GM13976 (cell line): ENCODE measurements at regions of chr1 and their contacts with region 1.

Region 1: GRCh38 chr1:157487096-157487495 is 65.2 kb downstream of the FCRL5 start:
- DNase-seq: no peak
- CTCF ChIP-seq: no peak

Region 2: DNA sequence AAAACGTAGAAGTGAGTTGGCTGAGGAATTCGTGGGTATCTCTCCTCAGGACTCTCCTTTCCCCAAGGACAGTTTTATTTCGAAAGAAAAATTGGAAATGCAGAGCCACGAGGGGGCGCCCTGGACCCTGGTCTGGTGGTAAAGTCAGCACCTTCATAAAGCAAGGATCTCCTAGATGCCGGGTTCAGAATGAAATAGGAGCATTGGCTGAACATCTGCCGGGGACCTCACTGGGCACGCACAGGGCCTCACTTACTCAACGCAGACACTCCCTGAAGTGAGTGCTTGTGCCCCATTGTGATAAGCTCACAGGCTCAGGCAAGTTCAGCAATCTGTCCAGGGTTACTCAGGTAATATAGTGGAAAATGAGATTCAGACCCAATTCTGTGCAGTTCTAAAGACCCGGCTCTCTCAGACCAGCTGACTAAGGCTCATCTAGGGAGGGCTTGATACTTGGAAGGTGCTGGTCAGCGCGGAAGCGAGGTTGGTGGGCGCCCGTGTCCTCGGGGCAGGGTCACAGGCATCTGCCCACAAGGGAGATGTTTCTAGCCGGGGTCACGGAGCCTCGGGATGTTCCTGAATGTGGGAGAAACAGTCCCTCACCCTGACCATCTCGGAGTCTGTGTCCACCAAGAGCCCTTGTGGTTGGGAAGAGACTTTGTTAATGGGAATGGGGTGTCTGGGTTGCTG is 293.2 kb before region 1 on chr1:
- in situ Hi-C with region 1: loop called (anchors 5 kb)
- DNase-seq: peak; percentile 74
- CTCF ChIP-seq: peak; percentile 68

Region 3: GRCh38 chr1:157369808-157370521 is 117.1 kb before region 1 on chr1:
- in situ Hi-C with region 1: loop called (anchors 5 kb)
- DNase-seq: peak; percentile 56
- CTCF ChIP-seq: peak; percentile 83

Region 4: DNA sequence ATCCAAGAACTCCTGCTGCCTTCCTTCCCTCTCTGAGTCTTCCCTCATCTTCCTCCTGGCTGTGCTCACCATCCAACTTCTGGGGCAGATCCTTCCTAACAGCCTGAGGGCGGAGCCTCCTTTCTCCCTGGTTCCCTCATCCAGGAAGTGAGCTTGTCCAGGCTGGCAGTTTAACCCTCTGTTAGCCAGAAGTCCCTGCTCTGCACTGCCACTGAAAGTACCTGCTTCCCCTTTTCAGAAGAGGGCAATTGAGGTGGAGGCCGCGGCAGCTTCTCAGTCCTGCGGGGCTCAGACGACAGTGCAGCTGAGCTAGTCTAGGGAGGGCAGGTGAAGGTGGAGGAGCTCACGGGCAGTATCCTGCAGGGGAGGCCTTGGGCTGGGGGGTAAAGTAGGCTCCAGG is 83.9 kb before region 1 on chr1:
- in situ Hi-C with region 1: no loop called
- DNase-seq: peak; percentile 38
- CTCF ChIP-seq: no peak

Region 5: DNA sequence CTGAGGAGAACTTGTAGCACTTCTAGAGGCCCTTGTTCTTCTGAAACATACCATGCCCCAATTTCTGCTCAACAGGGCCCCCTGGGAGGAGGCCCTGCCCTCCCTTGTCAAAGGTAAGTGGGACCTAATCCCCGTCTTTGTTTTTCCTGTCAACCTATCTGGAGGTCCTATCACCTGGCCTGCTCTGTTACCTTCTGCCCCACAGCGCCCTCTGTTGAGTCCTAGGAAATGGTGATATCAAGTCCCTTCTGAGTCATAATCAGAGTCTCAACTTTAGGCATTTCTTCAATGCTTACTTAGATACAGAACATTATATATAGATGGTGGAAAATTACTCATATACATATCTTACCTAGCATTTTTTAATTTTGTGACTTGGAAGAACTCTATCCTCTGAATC is 139.0 kb after region 1 on chr1:
- in situ Hi-C with region 1: no loop called
- DNase-seq: peak; percentile 41
- CTCF ChIP-seq: peak; percentile 37